IMR-90 (cell line): ENCODE measurements at regions of chr15 and their contacts with region 1.

Region 1: GRCh38 chr15:35444557-35445204 is 101.3 kb downstream of the DPH6 start:
- DNase-seq: peak; percentile 63
- ATAC-seq: no peak; the same call in 1 of the 2 replicates
- H3K4me3 ChIP-seq: no peak overlapping the region
- H3K27ac ChIP-seq: no peak overlapping the region
- H3K4me1 ChIP-seq: peaks cover 8% of the 10 kb centered on the region; the same call in 1 of the 2 replicates
- H3K27me3 ChIP-seq: no peaks in the 10 kb centered on the region
- CTCF ChIP-seq: peak; percentile 84
- POLR2A ChIP-seq: no peak
- RAD21 ChIP-seq: peak; percentile 88

Region 2: GRCh38 chr15:35078221-35078915 is 366.3 kb before region 1 on chr15:
- CTCF ChIA-PET with region 1: interaction called, 31 read pairs
- POLR2A ChIA-PET with region 1: no interaction called
- dilution Hi-C with region 1: no loop called
- in situ Hi-C with region 1: loop called (anchors 5 kb)
- intact Hi-C with region 1: loop called (anchors 1 kb)
- DNase-seq: peak; percentile 72
- ATAC-seq: peak; percentile 80
- H3K4me3 ChIP-seq: no peak overlapping the region
- H3K27ac ChIP-seq: no peak overlapping the region
- H3K4me1 ChIP-seq: peaks cover 5% of the 10 kb centered on the region; the same call in 1 of the 2 replicates
- H3K27me3 ChIP-seq: no peaks in the 10 kb centered on the region
- CTCF ChIP-seq: peak; percentile 95
- POLR2A ChIP-seq: 0 out of 2 replicates have a peak, but pooled peaks have one; percentile 47
- RAD21 ChIP-seq: peak; percentile 97